ENCODE measurements at regions of chr12 and their contacts with region 1.

Region 1: GRCh38 chr12:66235626-66236281 is 46.7 kb downstream of the IRAK3 start:
- DNase-seq: no peak
- ATAC-seq: no peak
- H3K4me3 Mint-ChIP-seq: peak overlapping the region; percentile 70
- H3K27ac Mint-ChIP-seq: no peak overlapping the region
- H3K4me1 Mint-ChIP-seq: peaks cover 31% of the 10 kb centered on the region
- H3K27me3 Mint-ChIP-seq: peaks cover under 1% of the 10 kb centered on the region
- CTCF ChIP-seq: no peak

Region 2: GRCh38 chr12:65800937-65801336 is 434.8 kb before region 1 on chr12:
- CTCF ChIA-PET with region 1: no interaction called
- POLR2A ChIA-PET with region 1: no interaction called
- intact Hi-C with region 1: no loop called
- DNase-seq: no peak
- ATAC-seq: no peak
- H3K4me3 Mint-ChIP-seq: no peak overlapping the region
- H3K27ac Mint-ChIP-seq: no peak overlapping the region
- H3K4me1 Mint-ChIP-seq: no peaks in the 10 kb centered on the region
- H3K27me3 Mint-ChIP-seq: no peaks in the 10 kb centered on the region
- CTCF ChIP-seq: no peak

Region 3: GRCh38 chr12:65911321-65911720 is 324.4 kb before region 1 on chr12:
- CTCF ChIA-PET with region 1: no interaction called
- POLR2A ChIA-PET with region 1: no interaction called
- intact Hi-C with region 1: no loop called
- DNase-seq: no peak
- ATAC-seq: no peak
- H3K4me3 Mint-ChIP-seq: no peak overlapping the region
- H3K27ac Mint-ChIP-seq: no peak overlapping the region
- H3K4me1 Mint-ChIP-seq: peaks cover 4% of the 10 kb centered on the region
- H3K27me3 Mint-ChIP-seq: peaks cover 2% of the 10 kb centered on the region
- CTCF ChIP-seq: no peak

Region 4: DNA sequence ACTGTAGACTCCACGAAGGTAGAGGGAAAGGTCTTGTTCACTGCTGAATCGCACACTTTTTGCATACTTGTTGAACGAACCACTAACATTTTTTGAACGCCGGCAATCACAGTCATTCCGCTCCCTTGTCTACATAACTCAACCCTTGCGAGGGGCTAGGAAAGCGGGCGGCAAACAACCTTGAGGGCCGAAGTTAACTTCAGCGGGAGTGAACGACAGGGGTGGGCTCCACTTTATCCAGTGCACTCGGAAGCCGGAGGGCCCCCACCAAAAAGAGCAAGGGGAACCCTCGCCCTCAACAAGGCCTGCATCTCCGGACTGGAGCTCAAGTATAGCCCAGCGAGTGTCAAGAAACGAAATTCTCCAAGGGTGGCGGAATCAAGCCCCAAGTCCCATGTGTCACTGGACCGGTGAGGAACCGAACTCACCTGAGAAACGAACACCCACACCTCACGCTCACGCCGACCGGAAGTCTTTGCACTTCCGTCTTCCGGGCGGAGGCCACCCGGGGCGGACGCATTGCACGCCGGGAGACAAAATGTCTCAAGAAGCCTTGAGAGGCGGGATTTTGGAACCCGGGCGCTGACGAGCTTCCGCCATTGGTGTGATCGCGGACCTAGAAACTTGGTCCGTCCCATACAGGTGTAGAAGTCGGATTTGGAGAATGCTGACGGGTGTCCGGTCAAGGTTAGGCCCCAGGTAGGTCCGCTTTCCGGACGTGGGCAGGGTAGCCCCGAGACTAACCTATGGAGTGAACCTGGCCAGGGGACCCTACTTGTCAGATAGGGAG is 105.3 kb before region 1 on chr12 and contains the start of gene LLPH:
- CTCF ChIA-PET with region 1: interaction called, 3 read pairs
- POLR2A ChIA-PET with region 1: interaction called, 11 read pairs
- intact Hi-C with region 1: loop called (anchors 1 kb)
- DNase-seq: peak; percentile 78
- ATAC-seq: peak; percentile 94
- H3K4me3 Mint-ChIP-seq: peak within 1 kb of the TSS; percentile 99
- H3K27ac Mint-ChIP-seq: peak within 1 kb of the TSS; percentile 96
- H3K4me1 Mint-ChIP-seq: peaks cover 43% of the 10 kb centered on the region
- H3K27me3 Mint-ChIP-seq: no peaks in the 10 kb centered on the region
- CTCF ChIP-seq: no peak
- total RNA-seq, gene LLPH: 29.5 and 35.5 TPM in 2 replicates

Region 5: GRCh38 chr12:66144791-66145754 is 90.7 kb before region 1 on chr12:
- CTCF ChIA-PET with region 1: interaction called, 5 read pairs
- POLR2A ChIA-PET with region 1: no interaction called
- intact Hi-C with region 1: loop called (anchors 5 kb)
- DNase-seq: no peak
- ATAC-seq: no peak
- H3K4me3 Mint-ChIP-seq: no peak overlapping the region
- H3K27ac Mint-ChIP-seq: peak overlapping the region; percentile 56
- H3K4me1 Mint-ChIP-seq: peaks cover 20% of the 10 kb centered on the region
- H3K27me3 Mint-ChIP-seq: no peaks in the 10 kb centered on the region
- CTCF ChIP-seq: no peak

Region 6: DNA sequence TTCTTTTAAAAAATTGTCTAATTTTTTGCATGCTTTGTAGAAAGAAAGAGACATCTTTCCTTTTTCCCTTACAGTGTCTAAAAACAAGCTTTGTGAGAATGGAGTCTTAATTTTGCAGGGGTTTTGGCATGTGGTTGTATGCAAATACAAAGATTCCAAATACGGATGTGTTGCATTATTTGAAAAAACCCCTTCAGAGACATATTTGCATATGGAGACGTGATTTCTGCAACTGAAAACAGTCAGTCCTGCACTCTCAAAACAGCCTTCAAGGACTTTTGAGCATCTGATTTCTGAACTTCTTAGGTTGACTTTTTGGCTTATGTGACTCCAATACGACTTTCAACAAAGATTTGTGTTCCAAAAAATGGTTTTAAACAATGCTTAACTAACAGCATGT is 38.9 kb before region 1 on chr12:
- CTCF ChIA-PET with region 1: no interaction called
- POLR2A ChIA-PET with region 1: interaction called, 12 read pairs
- intact Hi-C with region 1: loop called (anchors 1 kb)
- DNase-seq: no peak
- ATAC-seq: peak; percentile 95
- H3K4me3 Mint-ChIP-seq: peak overlapping the region; percentile 52
- H3K27ac Mint-ChIP-seq: peak overlapping the region; percentile 41
- H3K4me1 Mint-ChIP-seq: peaks cover 32% of the 10 kb centered on the region
- H3K27me3 Mint-ChIP-seq: peaks cover 11% of the 10 kb centered on the region
- CTCF ChIP-seq: no peak

Region 7: GRCh38 chr12:66217342-66217917 is 18.3 kb before region 1 on chr12:
- CTCF ChIA-PET with region 1: interaction called, 4 read pairs
- POLR2A ChIA-PET with region 1: no interaction called
- intact Hi-C with region 1: loop called (anchors 2 kb)
- DNase-seq: no peak
- ATAC-seq: peak; percentile 71
- H3K4me3 Mint-ChIP-seq: peak overlapping the region; percentile 55
- H3K27ac Mint-ChIP-seq: peak overlapping the region; percentile 89
- H3K4me1 Mint-ChIP-seq: peaks cover 30% of the 10 kb centered on the region
- H3K27me3 Mint-ChIP-seq: no peaks in the 10 kb centered on the region
- CTCF ChIP-seq: no peak

Region 8: GRCh38 chr12:66301944-66302826 is 66.4 kb after region 1 on chr12 and contains the start of gene HELB:
- CTCF ChIA-PET with region 1: no interaction called
- POLR2A ChIA-PET with region 1: interaction called, 15 read pairs
- intact Hi-C with region 1: loop called (anchors 1 kb)
- DNase-seq: peak; percentile 80
- ATAC-seq: peak; percentile 95
- H3K4me3 Mint-ChIP-seq: peak within 1 kb of the TSS; percentile 99
- H3K27ac Mint-ChIP-seq: peak within 1 kb of the TSS; percentile 86
- H3K4me1 Mint-ChIP-seq: peaks cover 41% of the 10 kb centered on the region
- H3K27me3 Mint-ChIP-seq: peaks cover 1% of the 10 kb centered on the region
- CTCF ChIP-seq: no peak
- total RNA-seq, gene HELB: 4.7 and 7.2 TPM in 2 replicates

Region 9: GRCh38 chr12:66409195-66409871 is 173.6 kb after region 1 on chr12:
- CTCF ChIA-PET with region 1: no interaction called
- POLR2A ChIA-PET with region 1: no interaction called
- intact Hi-C with region 1: loop called (anchors 1 kb)
- DNase-seq: no peak
- ATAC-seq: no peak
- H3K4me3 Mint-ChIP-seq: no peak overlapping the region
- H3K27ac Mint-ChIP-seq: no peak overlapping the region
- H3K4me1 Mint-ChIP-seq: no peaks in the 10 kb centered on the region
- H3K27me3 Mint-ChIP-seq: no peaks in the 10 kb centered on the region
- CTCF ChIP-seq: no peak

Measured in activated B cell treated with CpG ODN at 0.5 μM for 24 hours (primary cell).